Left ventricle myocardium inferior (tissue), 1 donor: ENCODE measurements at regions of chr3 and their contacts with region 1.

Region 1: DNA sequence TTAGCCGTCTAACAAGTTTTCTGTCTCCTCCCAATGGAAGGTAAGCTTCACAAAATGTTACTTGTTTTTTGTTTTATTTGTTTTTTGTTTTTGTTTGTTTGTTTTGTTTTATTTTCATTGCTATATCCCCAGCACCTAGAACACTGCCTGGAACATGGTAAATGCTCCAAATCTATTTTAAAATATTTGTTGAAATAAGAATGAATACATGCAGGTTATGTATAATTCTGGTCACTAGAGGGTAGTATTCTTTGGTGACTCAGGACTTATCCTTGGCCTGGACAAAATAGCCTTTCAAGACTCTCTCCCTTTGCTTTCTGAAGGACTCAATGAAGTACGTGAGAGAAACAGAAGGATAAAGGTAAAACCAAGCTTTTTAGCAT is 47.0 kb upstream of the PPP2R3A start:
- DNase-seq: no peak
- H3K4me3 ChIP-seq: no peak overlapping the region
- H3K27ac ChIP-seq: no peak overlapping the region
- H3K4me1 ChIP-seq: peaks cover 12% of the 10 kb centered on the region
- H3K27me3 ChIP-seq: no peaks in the 10 kb centered on the region
- CTCF ChIP-seq: peak; percentile 60

Region 2: GRCh38 chr3:136022529-136023263 is 104.1 kb after region 1 on chr3:
- intact Hi-C with region 1: no loop called
- DNase-seq: no peak
- H3K4me3 ChIP-seq: peak overlapping the region; percentile 65
- H3K27ac ChIP-seq: peak overlapping the region; percentile 89
- H3K4me1 ChIP-seq: peaks cover 58% of the 10 kb centered on the region
- H3K27me3 ChIP-seq: no peaks in the 10 kb centered on the region
- CTCF ChIP-seq: no peak

Region 3: DNA sequence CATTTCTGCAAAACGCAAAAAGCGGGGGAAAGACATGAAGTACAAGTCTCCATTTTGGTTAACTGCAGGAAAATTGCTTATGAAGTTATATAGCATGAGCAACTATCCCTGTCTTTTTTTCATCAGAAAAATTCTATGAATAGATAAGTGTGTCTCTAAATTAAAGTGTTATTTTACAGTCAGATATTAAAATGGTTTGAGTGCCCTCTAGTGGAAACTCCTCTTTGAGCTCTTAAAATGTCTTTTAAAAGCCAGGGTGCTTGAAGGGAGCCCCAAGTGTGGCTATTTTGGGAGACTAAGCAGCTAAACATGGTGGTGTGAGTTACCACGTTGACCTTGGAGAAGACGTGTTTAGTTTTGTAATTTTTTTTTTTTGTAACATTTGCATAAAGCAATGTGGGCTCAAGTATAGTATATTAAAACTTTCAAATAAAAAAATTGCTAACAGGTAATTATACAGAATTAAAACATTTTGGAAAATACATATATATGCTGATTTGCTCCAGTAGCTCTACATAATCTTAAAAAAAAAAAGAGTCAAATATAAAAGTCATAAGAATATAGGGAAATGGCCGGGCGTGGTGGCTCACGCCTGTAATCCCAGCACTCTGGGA is 124.1 kb after region 1 on chr3:
- intact Hi-C with region 1: loop called (anchors 5 kb)
- DNase-seq: no peak
- H3K4me3 ChIP-seq: no peak overlapping the region
- H3K27ac ChIP-seq: peak overlapping the region; percentile 7
- H3K4me1 ChIP-seq: peaks cover 32% of the 10 kb centered on the region
- H3K27me3 ChIP-seq: no peaks in the 10 kb centered on the region
- CTCF ChIP-seq: peak; percentile 68

Region 4: DNA sequence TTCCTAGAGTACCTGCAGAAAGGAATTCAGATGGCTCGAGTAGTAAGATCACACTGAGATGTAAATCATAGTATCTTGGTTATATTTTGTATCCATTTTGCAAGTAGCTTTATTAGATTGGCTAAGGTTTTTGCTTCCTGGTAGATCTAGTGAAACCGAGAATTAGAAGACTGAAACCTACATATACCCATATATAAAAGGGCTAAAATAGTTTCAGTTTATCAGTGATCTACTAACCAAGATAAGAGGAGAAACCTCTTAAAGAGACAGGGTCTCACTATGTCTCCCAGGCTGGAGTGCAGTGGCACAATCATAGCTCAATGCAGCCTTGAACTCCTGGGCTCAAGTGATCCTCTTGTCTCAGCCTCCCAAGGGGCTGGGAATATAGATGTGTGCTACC is 466.9 kb after region 1 on chr3:
- intact Hi-C with region 1: no loop called
- DNase-seq: no peak
- H3K4me3 ChIP-seq: no peak overlapping the region
- H3K27ac ChIP-seq: no peak overlapping the region
- H3K4me1 ChIP-seq: peaks cover under 1% of the 10 kb centered on the region
- H3K27me3 ChIP-seq: no peaks in the 10 kb centered on the region
- CTCF ChIP-seq: no peak